ENCODE measurements at regions of chr3 and their contacts with region 1.

Region 1: GRCh38 chr3:186534113-186534669 is 10.0 kb downstream of the CRYGS start:
- DNase-seq: peak; percentile 50 to 93 (median 89)
- H3K4me3 ChIP-seq: no peak overlapping the region
- H3K27ac ChIP-seq: no peak overlapping the region
- H3K4me1 ChIP-seq: peaks cover 25 to 64% (median 50%) of the 10 kb centered on the region in 4 experiments
- H3K27me3 ChIP-seq: no peaks in the 10 kb centered on the region

Region 2: DNA sequence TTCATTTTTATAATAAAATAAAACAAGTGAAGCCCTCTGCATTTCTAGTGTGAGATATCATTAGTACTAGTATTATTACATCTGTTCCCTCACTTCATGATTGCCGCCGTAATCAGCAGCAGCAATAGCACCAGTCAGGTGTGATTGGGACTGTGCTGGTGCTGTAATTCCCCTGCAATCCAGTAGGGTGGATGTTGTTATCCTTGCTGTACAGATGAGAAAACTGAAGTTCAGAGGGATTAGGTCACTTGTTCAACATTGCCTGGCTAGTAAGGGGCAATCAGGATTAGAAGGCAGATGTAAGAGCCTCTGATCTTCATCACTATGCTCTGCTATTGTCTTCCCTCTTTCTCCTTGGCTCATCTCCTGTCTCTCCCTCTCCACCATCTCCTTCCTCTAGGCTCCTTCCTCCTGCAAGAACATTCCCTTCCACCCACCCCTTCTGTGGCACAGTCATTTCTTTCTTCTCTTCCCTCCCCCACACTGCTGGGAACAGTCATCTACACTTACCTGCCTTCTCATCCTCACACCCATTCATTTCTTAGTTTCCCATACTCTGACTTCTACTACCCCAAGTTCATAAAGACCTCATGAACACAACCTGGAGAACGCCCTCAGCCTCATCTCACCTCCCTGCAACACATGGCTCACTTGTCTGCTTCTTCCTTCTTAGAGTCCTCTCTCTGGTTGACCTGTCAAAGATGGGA is 19.7 kb before region 1 on chr3:
- CTCF ChIA-PET with region 1: interaction called, 46 read pairs
- POLR2A ChIA-PET with region 1: interaction called, 17 read pairs
- DNase-seq: peak in 2 of 3 donors; percentile 39 to 53
- H3K4me3 ChIP-seq: peak overlapping the region in 1 of 7 experiments; percentile 0
- H3K27ac ChIP-seq: peak overlapping the region; percentile 46 to 75
- H3K4me1 ChIP-seq: peaks cover 14 to 87% (median 45%) of the 10 kb centered on the region in 4 experiments
- H3K27me3 ChIP-seq: no peaks in the 10 kb centered on the region

Region 3: DNA sequence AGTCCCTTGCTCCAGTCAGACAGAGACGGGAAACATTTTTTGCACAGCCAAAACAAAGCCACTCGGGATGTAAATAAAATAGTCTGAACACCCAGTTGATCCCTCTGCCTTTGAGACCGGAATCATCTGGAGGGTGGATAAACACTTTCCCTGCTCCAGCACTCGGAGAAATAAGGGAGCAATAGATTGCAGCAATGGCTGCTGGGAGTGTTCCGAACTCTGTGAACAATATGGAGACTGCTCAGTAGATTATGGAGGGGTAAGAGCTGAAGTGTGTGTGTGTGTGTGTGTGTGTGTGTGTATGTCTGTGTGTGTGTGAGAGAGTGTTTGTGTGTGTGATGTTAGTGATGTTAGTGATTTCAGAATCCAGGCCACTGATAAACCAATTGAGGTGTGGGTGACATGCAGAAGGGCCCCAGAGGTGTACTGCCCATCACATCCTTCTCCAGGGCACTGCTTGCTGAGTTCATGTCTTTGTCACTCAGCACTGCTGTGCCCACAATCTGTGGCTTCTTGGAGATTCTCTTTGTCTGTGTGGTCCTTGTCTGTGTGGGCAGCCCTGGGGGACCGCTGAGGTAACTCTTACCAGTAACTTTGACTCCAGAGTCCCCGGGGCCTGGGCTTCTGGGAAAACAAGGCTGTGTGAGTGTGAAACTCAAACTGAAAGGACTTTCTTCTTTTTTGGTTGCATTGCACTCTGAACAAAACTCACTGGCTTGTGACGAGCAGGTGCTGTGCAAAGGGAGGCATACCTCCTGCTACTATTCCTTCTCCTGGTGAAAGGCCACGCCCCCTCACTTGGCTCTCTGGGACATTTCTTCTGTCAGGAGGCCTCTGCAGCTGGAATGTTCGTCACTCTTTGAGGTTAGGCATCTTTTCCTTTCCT is 13.0 kb before region 1 on chr3:
- CTCF ChIA-PET with region 1: interaction called, 46 read pairs
- POLR2A ChIA-PET with region 1: interaction called, 17 read pairs
- DNase-seq: no peak
- H3K4me3 ChIP-seq: no peak overlapping the region
- H3K27ac ChIP-seq: peak overlapping the region in 1 of 2 experiments; percentile 5
- H3K4me1 ChIP-seq: peaks cover 14 to 69% (median 44%) of the 10 kb centered on the region in 4 experiments
- H3K27me3 ChIP-seq: no peaks in the 10 kb centered on the region

Measured in common myeloid progenitor, CD34-positive (primary cell).